Activated B cell treated with CpG ODN at 0.5 μM for 24 hours (primary cell): ENCODE measurements at regions of chr2 and their contacts with region 1.

Region 1: DNA sequence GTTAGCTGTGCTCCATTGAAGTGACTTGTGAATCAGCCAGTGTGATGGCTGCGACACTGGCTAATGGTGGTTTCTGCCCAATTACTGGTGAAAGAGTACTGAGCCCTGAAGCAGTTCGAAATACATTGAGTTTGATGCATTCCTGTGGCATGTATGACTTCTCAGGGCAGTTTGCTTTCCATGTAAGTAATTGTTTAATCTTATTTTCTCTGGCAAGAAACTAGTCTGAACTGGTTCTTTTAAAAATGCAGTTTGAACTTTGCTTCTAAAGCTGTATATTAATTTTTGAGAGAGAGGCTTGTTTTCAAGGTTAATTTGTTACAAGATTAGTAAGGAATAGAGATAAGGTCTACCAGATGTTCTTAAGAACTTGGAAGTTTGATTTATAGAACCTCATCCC is 46.7 kb downstream of the GLS start:
- DNase-seq: no peak
- ATAC-seq: no peak
- H3K4me3 Mint-ChIP-seq: no peak overlapping the region
- H3K27ac Mint-ChIP-seq: no peak overlapping the region
- H3K4me1 Mint-ChIP-seq: no peaks in the 10 kb centered on the region
- H3K27me3 Mint-ChIP-seq: no peaks in the 10 kb centered on the region
- CTCF ChIP-seq: no peak

Region 2: GRCh38 chr2:190887089-190887488 is 40.2 kb before region 1 on chr2:
- CTCF ChIA-PET with region 1: no interaction called
- POLR2A ChIA-PET with region 1: no interaction called
- intact Hi-C with region 1: loop called (anchors 5 kb)
- DNase-seq: no peak
- ATAC-seq: peak; percentile 65
- H3K4me3 Mint-ChIP-seq: no peak overlapping the region
- H3K27ac Mint-ChIP-seq: peak overlapping the region; percentile 74
- H3K4me1 Mint-ChIP-seq: peaks cover 88% of the 10 kb centered on the region
- H3K27me3 Mint-ChIP-seq: no peaks in the 10 kb centered on the region
- CTCF ChIP-seq: no peak

Region 3: GRCh38 chr2:190911813-190912212 is 15.5 kb before region 1 on chr2:
- CTCF ChIA-PET with region 1: no interaction called
- POLR2A ChIA-PET with region 1: no interaction called
- intact Hi-C with region 1: loop called (anchors 2 kb)
- DNase-seq: no peak
- ATAC-seq: peak; percentile 34
- H3K4me3 Mint-ChIP-seq: no peak overlapping the region
- H3K27ac Mint-ChIP-seq: peak overlapping the region; percentile 60
- H3K4me1 Mint-ChIP-seq: peaks cover 8% of the 10 kb centered on the region
- H3K27me3 Mint-ChIP-seq: no peaks in the 10 kb centered on the region
- CTCF ChIP-seq: no peak

Region 4: GRCh38 chr2:190940454-190940853 is 13.2 kb after region 1 on chr2:
- CTCF ChIA-PET with region 1: no interaction called
- POLR2A ChIA-PET with region 1: no interaction called
- intact Hi-C with region 1: loop called (anchors 2 kb)
- DNase-seq: no peak
- ATAC-seq: no peak
- H3K4me3 Mint-ChIP-seq: no peak overlapping the region
- H3K27ac Mint-ChIP-seq: no peak overlapping the region
- H3K4me1 Mint-ChIP-seq: peaks cover 7% of the 10 kb centered on the region
- H3K27me3 Mint-ChIP-seq: no peaks in the 10 kb centered on the region
- CTCF ChIP-seq: no peak